ENCODE measurements at regions of chr3 and their contacts with region 1.

Region 1: GRCh38 chr3:17412950-17413530 is 329.4 kb downstream of the TBC1D5 start:
- DNase-seq: peak in 1 of 3 donors; percentile 58
- ATAC-seq: peak; percentile 77
- H3K4me3 ChIP-seq: no peak overlapping the region
- H3K4me1 ChIP-seq: no peaks in the 10 kb centered on the region
- CTCF ChIP-seq: peak; percentile 57

Region 2: GRCh38 chr3:17258823-17259436 is 154.1 kb before region 1 on chr3:
- intact Hi-C with region 1: loop called (anchors 5 to 10 kb)
- DNase-seq: peak in 1 of 3 donors; percentile 45
- ATAC-seq: no peak
- H3K4me3 ChIP-seq: no peak overlapping the region
- H3K4me1 ChIP-seq: no peaks in the 10 kb centered on the region
- CTCF ChIP-seq: peak; percentile 23

Region 3: DNA sequence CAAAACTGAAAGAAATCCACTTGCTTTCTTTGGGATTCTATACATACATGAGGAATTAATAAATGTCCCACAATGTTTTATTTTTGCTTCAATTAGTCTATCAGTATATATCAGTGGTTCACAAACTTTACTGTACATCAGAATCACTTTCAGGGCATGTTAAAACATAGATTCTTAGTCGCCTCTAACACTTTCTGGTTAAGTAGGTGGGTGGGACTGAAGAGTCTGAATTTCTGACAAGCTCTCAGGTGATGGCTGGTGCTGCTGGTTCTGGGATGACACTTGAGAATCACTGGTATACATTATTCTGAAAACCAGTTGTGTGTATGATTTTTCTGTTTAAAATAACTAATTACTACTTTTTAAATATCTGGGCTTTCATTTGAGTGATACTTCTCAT is 63.9 kb before region 1 on chr3:
- intact Hi-C with region 1: no loop called
- DNase-seq: no peak
- ATAC-seq: no peak
- H3K4me3 ChIP-seq: no peak overlapping the region
- H3K4me1 ChIP-seq: no peaks in the 10 kb centered on the region
- CTCF ChIP-seq: no peak